ENCODE measurements at regions of chr4 and their contacts with region 1.

Region 1: GRCh38 chr4:27000820-27001219 is 140.2 kb downstream of the STIM2 start:
- DNase-seq: no peak
- ATAC-seq: no peak
- H3K4me3 ChIP-seq: no peak overlapping the region
- H3K27ac ChIP-seq: no peak overlapping the region
- H3K4me1 ChIP-seq: peaks cover 0 to 9% (median 2%) of the 10 kb centered on the region in 9 donors
- H3K27me3 ChIP-seq: no peaks in the 10 kb centered on the region
- CTCF ChIP-seq: no peak

Region 2: GRCh38 chr4:26330186-26330787 is 670.5 kb before region 1 on chr4:
- intact Hi-C with region 1: loop called in 1 of 10 experiments (anchors 10 kb)
- DNase-seq: no peak
- ATAC-seq: peak in 5 of 8 donors; percentile 66 to 78 (median 76)
- H3K4me3 ChIP-seq: no peak overlapping the region
- H3K27ac ChIP-seq: peak overlapping the region in 1 of 10 donors; percentile 5
- H3K4me1 ChIP-seq: peaks cover 0 to 82% (median 26%) of the 10 kb centered on the region in 9 donors
- H3K27me3 ChIP-seq: no peaks in the 10 kb centered on the region
- CTCF ChIP-seq: peak; percentile 48 to 76 (median 69)

Region 3: DNA sequence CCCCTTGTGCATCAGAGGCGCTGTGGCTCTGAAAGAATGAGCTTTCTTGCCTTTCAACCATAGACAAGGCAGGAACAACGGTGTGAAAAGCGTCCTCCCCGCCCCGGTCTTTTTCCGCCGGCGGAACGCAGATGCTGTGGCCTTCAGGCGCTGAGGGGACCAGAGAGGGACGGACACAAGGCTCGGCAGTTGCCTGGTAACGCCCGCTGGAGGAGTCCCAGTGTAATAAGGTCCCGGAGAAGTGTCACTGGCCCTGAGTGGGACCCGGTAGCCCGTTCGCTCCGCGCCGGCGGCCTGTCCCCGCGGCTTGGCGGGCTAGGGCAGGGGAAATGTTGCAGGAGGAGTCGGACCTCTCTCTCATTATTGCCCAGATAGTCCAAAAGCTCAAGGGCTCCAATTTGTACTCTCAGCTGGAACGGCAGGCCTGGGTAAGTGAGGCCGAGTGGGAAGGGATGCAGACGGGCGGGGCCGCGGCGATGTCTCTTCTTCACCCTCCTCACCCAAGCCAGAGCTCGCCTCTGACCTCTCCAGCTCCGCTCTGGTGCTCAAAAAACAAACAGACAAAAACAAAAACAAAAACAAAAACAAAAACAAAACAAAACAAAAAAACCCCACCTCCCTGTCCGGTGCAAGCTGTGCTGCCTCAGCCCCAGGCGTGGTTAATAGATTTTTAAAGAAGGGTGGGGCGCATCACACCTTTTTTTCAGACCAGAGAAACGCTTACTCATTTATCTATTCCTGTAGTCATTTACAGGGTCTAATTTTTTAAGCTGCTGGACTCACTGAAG is 416.8 kb before region 1 on chr4 and contains the start of gene TBC1D19:
- intact Hi-C with region 1: loop called in 1 of 10 experiments (anchors 5 kb)
- DNase-seq: peak; percentile 86 to 87
- ATAC-seq: peak; percentile 99 to 100 (median 100)
- H3K4me3 ChIP-seq: peak within 1 kb of the TSS; percentile 40 to 89 (median 80)
- H3K27ac ChIP-seq: peak within 1 kb of the TSS in 9 of 10 donors; percentile 59 to 86 (median 76)
- H3K4me1 ChIP-seq: peaks cover 0 to 24% (median 15%) of the 10 kb centered on the region in 9 donors
- H3K27me3 ChIP-seq: no peaks in the 10 kb centered on the region
- CTCF ChIP-seq: no peak
- total RNA-seq, gene TBC1D19: 6.1 to 10.7 (median 9.7) TPM

Region 4: GRCh38 chr4:26719954-26720552 is 280.8 kb before region 1 on chr4:
- intact Hi-C with region 1: loop called in 2 of 10 experiments (anchors 5 to 10 kb)
- DNase-seq: no peak
- ATAC-seq: no peak
- H3K4me3 ChIP-seq: no peak overlapping the region
- H3K27ac ChIP-seq: no peak overlapping the region
- H3K4me1 ChIP-seq: peaks cover 0 to under 1% (median 0%) of the 10 kb centered on the region in 9 donors
- H3K27me3 ChIP-seq: no peaks in the 10 kb centered on the region
- CTCF ChIP-seq: peak; percentile 34 to 71 (median 66)

Region 5: GRCh38 chr4:26727844-26728243 is 273.0 kb before region 1 on chr4:
- intact Hi-C with region 1: loop called in 2 of 10 experiments (anchors 5 to 10 kb)
- DNase-seq: no peak
- ATAC-seq: no peak
- H3K4me3 ChIP-seq: no peak overlapping the region
- H3K27ac ChIP-seq: no peak overlapping the region
- H3K4me1 ChIP-seq: peaks cover 0 to 12% (median 6%) of the 10 kb centered on the region in 9 donors
- H3K27me3 ChIP-seq: no peaks in the 10 kb centered on the region
- CTCF ChIP-seq: no peak

Region 6: DNA sequence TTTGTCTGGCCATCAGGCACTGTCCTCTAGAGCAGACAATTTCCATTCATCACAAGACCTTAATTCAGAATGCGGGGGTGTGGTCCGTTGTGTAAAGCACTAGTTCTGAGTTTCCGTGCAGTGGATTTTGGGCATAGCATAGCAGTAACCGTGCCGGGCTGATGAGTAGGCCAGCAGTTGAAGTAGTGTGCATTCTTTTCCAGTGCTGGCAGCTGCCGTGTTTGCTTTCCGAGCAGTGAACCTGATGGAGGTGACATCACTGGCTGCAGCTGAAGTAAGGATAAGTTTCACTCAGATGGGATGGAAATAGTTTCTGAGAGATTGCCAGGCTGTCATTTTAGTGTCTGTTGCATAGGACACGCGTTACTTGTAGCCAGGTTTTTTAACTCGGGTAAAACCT is 247.2 kb before region 1 on chr4:
- intact Hi-C with region 1: no loop called
- DNase-seq: peak; percentile 34 to 69
- ATAC-seq: peak; percentile 82 to 99 (median 95)
- H3K4me3 ChIP-seq: no peak overlapping the region
- H3K27ac ChIP-seq: peak overlapping the region in 5 of 10 donors; percentile 11 to 54 (median 28)
- H3K4me1 ChIP-seq: peaks cover 0 to 21% (median 15%) of the 10 kb centered on the region in 9 donors
- H3K27me3 ChIP-seq: no peaks in the 10 kb centered on the region
- CTCF ChIP-seq: no peak

Region 7: GRCh38 chr4:26787461-26788340 is 213.1 kb before region 1 on chr4:
- intact Hi-C with region 1: loop called in 4 of 10 experiments (anchors 5 to 10 kb)
- DNase-seq: peak; percentile 36 to 69
- ATAC-seq: peak; percentile 72 to 87 (median 80)
- H3K4me3 ChIP-seq: peak overlapping the region in 4 of 10 donors; percentile 1 to 18 (median 13)
- H3K27ac ChIP-seq: peak overlapping the region in 9 of 10 donors; percentile 23 to 68 (median 59)
- H3K4me1 ChIP-seq: peaks cover 2 to 39% (median 22%) of the 10 kb centered on the region in 9 donors
- H3K27me3 ChIP-seq: no peaks in the 10 kb centered on the region
- CTCF ChIP-seq: peak in 8 of 9 donors; percentile 31 to 71 (median 49)

Region 8: DNA sequence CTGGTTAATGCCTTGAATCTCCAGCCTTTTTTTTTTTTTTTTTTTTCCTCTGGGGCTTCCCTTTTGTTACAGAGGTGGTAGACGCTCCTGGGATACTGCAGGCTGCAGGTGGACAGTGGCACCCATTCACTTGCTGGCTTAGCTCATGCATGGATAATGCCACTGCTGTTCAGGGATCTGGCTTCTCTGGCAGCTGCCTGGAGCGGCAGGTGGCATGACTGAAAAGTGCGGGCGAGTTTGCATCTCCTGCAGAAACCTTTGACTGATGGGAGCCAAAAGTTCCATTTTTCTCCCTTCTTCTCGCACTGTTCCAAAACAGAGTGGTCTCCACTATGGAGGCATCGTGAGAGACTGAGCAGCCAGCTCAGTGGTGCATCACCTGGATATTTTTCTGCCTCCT is 146.1 kb before region 1 on chr4:
- intact Hi-C with region 1: no loop called
- DNase-seq: no peak
- ATAC-seq: no peak
- H3K4me3 ChIP-seq: no peak overlapping the region
- H3K27ac ChIP-seq: no peak overlapping the region
- H3K4me1 ChIP-seq: peaks cover 7 to 28% (median 21%) of the 10 kb centered on the region in 9 donors
- H3K27me3 ChIP-seq: no peaks in the 10 kb centered on the region
- CTCF ChIP-seq: no peak